HEK293 (cell line): ENCODE measurements at regions of chr17 and their contacts with region 1.

Region 1: DNA sequence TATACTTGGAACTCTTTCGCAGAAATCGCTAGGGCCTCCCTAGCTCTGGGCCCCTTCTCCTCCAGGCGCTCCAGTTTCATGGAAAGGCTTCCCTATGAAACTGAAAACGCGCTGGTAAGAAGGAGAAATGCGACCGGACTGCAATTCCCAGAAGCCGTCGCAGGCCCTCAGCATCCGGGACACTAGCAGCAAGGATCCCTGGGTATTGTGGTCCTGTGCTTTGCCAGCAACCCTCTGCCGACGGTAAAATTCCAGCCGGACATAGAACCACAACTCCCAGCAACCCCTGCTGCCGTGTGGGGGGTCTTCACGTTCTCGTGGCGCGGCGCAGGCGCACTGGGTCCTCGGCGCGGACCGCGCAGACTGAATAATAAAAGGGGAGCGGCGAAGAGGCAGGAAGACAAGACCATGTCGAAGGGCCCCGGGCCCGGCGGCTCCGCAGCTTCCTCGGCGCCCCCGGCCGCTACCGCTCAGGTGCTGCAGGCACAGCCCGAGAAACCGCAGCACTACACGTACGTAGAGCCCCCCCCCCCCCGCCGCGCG is at the start of gene UNK:
- H3K4me3 ChIP-seq: peak within 1 kb of the TSS; percentile 79
- H3K27ac ChIP-seq: peak within 1 kb of the TSS; percentile 98
- H3K4me1 ChIP-seq: peaks cover 12% of the 10 kb centered on the region; the same call in 1 of the 2 replicates
- CTCF ChIP-seq: no peak

Region 2: DNA sequence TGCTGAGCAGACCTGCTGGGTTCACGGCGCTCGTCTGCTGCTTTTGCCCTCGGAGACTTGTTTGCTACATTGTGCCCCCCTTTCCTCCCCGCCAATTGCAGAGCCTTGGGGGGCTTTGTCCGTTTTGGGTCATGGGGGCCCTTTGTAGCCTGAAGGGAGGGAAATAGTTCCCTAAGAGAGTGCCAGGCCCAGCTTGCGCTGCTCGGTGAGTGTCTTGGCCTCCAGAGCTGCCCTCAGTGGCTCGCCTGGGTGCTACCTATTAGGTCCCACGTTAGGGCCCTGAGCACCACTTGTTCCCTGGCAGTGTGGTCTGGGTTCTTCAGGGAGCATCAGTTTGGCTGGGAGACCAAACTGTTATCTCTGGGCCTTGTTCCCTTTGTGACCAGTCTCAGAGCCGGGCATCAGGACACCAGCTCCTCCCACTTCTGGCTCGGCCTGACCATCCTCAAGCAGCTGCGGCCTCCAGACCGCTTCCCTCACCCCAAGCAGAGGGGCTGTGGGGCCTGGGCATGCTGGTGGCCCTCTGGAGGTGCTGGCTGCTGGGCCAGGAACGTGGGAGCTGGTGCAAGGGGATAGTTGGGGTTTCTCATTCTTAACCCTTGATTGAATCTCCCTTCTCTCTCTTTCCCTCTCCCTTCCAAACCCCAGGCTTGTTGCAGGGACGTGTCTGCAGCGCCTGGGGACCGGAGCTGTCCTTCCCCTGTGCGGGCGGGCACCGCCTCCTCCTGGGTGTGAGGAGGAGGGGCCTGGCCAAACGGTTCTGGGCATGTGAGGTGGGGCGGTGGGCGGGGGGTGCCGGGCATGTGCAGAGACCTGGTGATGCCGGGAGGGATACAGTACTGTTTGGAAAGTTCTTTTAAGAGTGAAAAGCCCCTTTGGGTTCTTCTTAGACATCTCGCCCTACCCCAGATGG is 79.3 kb before region 1 on chr17:
- CTCF ChIA-PET with region 1: no interaction called
- POLR2A ChIA-PET with region 1: no interaction called
- H3K4me3 ChIP-seq: no peak overlapping the region
- H3K27ac ChIP-seq: no peak overlapping the region
- H3K4me1 ChIP-seq: no peaks in the 10 kb centered on the region
- CTCF ChIP-seq: no peak

Region 3: GRCh38 chr17:75764711-75765421 is 19.7 kb before region 1 on chr17 and contains the start of gene GALK1:
- CTCF ChIA-PET with region 1: interaction called, 73 read pairs
- POLR2A ChIA-PET with region 1: interaction called, 234 read pairs
- H3K4me3 ChIP-seq: peak within 1 kb of the TSS; percentile 63
- H3K27ac ChIP-seq: peak within 1 kb of the TSS; percentile 70
- H3K4me1 ChIP-seq: peaks cover 3% of the 10 kb centered on the region; the same call in 1 of the 2 replicates
- CTCF ChIP-seq: peak; percentile 93

Region 4: GRCh38 chr17:75799398-75799797 is 14.9 kb after region 1 on chr17:
- CTCF ChIA-PET with region 1: interaction called, 10 read pairs
- POLR2A ChIA-PET with region 1: interaction called, 51 read pairs
- H3K4me3 ChIP-seq: no peak overlapping the region
- H3K27ac ChIP-seq: no peak overlapping the region
- H3K4me1 ChIP-seq: no peaks in the 10 kb centered on the region
- CTCF ChIP-seq: no peak

Region 5: GRCh38 chr17:75861927-75862317 is 77.4 kb after region 1 on chr17:
- CTCF ChIA-PET with region 1: interaction called, 11 read pairs
- POLR2A ChIA-PET with region 1: interaction called, 26 read pairs
- H3K4me3 ChIP-seq: no peak overlapping the region
- H3K27ac ChIP-seq: no peak overlapping the region
- H3K4me1 ChIP-seq: 0 out of 2 replicates have a peak, but pooled peaks cover 4% of the 10 kb centered on the region
- CTCF ChIP-seq: no peak

Region 6: GRCh38 chr17:75927286-75927922 is 142.9 kb after region 1 on chr17:
- CTCF ChIA-PET with region 1: no interaction called
- POLR2A ChIA-PET with region 1: no interaction called
- H3K4me3 ChIP-seq: no peak overlapping the region
- H3K27ac ChIP-seq: no peak overlapping the region
- H3K4me1 ChIP-seq: no peaks in the 10 kb centered on the region
- CTCF ChIP-seq: peak; percentile 15; the same call in 1 of the 2 replicates

Region 7: DNA sequence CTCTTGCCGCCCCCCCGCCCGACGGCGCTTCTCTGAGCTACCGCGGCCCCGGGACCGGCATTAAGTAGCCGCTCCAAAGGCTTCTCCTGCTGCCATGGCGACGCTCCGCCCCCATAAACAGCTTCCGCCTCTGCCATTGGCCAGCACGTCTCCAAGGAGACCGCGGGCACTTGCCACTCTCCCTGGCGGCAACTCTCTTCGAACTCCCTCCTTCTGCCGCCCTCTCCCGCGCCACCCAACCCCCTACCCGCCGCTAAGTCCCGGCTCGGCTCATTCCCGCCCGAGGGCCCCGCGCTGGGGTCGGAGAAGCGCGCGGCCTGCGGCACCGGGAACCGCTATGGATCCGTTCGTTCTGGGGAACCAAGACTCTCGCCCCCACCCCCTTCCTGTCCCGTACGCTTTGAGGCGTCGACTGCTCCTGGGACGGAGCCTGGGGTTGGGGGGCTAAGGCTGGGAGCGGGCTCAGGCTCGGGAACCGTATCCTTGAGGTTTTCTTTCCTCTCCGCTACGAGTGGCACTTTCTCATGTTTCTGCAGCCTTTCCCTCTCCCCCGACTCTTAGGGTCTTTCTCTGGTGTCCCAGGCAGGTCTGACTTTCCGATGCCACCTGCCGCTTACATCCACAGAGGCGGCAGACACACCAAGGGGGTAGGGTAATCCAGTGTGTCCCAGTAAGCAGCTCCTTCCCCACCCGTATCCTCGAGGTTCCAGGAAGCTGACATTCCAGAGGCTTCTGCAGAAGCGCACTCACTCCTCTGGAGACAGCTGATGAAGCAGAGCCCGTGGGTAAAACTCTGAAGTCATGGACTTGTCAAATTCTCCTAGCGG is 356.9 kb after region 1 on chr17 and contains the start of gene FOXJ1:
- CTCF ChIA-PET with region 1: no interaction called
- POLR2A ChIA-PET with region 1: no interaction called
- H3K4me3 ChIP-seq: peak within 1 kb of the TSS; percentile 27
- H3K27ac ChIP-seq: peak within 1 kb of the TSS; percentile 48; the same call in 1 of the 2 replicates
- H3K4me1 ChIP-seq: peaks cover 9% of the 10 kb centered on the region
- CTCF ChIP-seq: no peak